Left cardiac atrium (tissue), 4 donors: ENCODE measurements at regions of chr11 and their contacts with region 1.

Region 1: DNA sequence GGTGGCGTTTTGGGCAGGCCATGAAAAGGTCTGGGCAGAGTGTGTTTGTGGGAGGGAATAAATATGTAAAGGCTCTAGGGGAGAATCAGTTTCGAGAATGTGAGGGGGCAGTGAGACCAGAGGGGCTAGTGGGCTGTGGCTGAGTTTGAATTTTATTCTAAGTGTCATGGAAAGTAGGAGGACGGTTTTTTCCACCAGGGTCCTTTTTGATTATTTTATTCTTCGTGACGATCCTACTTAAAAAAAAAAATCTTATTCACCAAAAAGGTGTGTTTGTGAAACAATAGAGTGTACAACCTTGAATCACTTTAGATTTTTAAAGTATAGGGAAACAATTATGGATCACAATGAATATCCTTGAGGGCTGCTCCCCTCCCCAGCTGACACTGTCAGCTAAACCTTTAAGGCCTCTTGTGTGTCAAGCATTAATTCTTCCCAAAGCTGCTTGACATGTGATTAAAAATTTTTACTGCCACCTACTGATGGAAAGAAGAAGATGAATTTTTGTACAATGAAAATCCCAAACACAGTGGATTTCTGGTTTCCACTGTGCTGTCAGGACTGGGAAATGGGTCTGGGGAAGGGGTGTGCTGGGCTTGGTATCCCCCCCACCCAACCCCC is 107.5 kb upstream of the OR4B1 start:
- DNase-seq: no peak
- ATAC-seq: peak; percentile 52 to 66

Region 2: GRCh38 chr11:47932544-47932943 is 176.6 kb before region 1 on chr11:
- intact Hi-C with region 1: loop called (anchors 1 to 5 kb)
- DNase-seq: no peak
- ATAC-seq: no peak

Region 3: DNA sequence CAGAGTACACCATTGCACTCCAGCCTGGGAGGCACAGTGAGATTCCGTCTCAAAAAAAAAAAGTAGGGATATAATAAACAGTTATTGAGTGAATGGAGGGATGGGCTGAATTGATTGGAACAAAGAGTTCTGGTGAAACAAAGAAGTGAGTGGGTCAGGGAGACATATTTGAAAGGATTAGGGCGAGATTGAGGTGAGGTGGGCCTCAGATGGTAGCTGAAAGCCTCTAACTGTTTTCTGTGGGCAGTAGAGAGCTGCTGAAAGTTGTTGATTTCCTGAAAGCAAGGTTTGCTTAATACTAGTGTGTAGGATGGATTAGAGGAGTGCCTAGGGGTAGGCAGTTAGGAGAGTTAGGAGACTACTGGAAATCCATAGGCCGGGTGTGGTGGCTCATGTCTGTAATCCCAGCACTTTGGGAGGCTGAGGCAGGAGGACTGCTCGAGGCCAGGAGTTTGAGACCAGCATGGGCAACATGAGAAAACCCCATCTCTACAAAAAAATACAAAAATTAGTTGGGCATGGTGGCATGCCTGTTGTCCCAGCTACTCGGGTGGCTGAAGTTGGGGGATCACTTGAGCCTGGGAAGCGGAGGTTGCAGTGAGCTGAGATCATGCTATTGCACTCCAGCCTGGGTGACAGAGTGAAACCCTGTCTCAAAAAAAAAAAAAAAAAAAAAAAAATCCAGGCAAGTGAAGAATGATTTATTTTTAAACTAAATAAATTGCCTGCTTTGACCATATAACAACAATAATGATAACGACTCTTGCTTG is 170.2 kb before region 1 on chr11:
- intact Hi-C with region 1: loop called (anchors 1 to 5 kb)
- DNase-seq: no peak
- ATAC-seq: no peak

Region 4: DNA sequence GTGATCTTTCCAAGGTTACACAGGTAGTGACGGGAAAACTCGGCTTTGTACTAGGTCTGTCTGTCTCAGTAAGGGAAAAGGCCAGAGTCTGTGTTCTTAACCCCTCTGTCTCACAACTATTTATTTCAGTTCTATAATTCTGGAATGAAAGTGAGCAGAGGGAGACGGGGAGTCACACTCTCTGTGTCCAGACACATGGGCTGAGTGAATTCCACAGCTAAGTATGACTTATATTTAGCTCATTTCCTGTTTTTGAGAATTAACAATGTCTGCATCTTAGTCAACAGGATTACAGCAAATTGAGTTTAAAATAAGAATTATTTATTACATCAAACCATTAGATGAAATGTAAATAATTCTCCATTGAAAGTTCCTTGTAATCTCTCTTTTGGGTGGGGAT is 45.0 kb after region 1 on chr11:
- intact Hi-C with region 1: no loop called
- DNase-seq: no peak
- ATAC-seq: no peak